ENCODE measurements at regions of chr16 and their contacts with region 1.

Region 1: DNA sequence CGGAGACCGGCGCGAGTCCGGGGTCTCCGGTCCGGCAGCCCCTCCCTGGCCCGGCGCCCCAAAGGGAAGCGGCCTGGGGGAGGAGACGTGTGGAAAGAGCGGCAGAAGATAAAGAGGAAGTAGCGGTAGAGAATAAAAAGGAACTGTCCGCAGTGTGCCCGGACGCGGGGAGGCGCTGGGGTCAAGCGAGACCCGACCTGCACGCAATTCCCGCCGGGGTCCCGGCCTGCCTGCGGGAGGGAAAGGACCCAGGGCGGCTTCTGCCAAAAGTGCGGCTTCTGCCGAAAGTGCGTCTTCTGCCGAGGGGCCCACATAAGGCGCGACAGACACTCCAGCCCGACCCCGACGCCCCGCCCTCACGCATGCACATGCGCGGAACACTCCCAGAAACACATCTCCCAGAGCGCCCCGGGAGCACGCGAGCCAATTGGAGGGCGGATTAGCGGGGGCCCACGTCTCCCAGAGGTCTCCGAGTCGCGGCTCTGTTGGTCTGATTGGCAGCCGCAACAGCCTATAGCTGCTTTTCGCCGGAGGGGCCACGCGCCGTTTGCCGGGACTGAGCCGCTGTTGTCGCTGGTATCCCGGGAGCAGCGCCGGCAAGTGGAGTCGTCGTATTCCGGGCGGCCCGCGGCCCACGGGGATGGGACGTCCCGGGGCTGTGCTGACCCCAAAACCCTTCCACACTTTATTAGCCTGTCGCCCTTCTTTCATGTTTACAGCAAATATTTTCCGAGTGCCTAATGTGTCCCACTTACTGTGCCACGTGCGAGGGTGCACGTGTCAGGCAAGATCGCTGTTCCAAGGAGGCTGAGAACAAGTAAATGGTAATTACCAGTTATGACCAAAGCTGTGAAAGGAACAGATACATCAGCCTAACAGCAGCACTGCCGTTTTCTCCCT is 8.0 kb upstream of the MEFV start:
- DNase-seq: peak; percentile 99
- H3K4me3 ChIP-seq: peak overlapping the region; percentile 87
- H3K27ac ChIP-seq: peak overlapping the region; percentile 83
- H3K4me1 ChIP-seq: peaks cover 24% of the 10 kb centered on the region
- CTCF ChIP-seq: peak; percentile 54

Region 2: GRCh38 chr16:3065069-3065741 is 199.2 kb before region 1 on chr16 and contains the start of gene IL32:
- CTCF ChIA-PET with region 1: no interaction called
- POLR2A ChIA-PET with region 1: no interaction called
- intact Hi-C with region 1: no loop called
- DNase-seq: no peak
- H3K4me3 ChIP-seq: no peak within 1 kb of the TSS
- H3K27ac ChIP-seq: no peak within 1 kb of the TSS
- H3K4me1 ChIP-seq: no peaks in the 10 kb centered on the region
- CTCF ChIP-seq: no peak
- total RNA-seq, gene IL32: not detected in 2 replicates

Region 3: DNA sequence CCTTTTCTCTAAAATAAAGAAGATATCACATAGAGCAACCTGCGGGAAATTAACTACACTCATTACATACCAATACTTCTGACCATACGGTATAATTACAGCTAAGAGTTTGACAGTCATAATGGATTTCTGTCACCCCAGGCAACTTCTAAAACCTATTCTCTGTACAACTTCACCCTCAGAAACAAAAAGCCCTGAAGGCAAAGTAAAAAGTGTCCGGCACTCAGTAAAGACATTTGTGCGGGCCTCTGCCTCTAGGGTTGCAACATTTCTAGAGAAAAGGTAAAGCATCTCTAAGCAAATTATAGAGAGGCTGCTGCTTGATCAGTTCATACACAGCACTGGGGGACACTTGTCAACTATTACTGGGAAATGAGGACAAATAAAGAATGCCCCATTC is 33.1 kb before region 1 on chr16:
- CTCF ChIA-PET with region 1: no interaction called
- POLR2A ChIA-PET with region 1: no interaction called
- intact Hi-C with region 1: no loop called
- DNase-seq: no peak
- H3K4me3 ChIP-seq: no peak overlapping the region
- H3K27ac ChIP-seq: no peak overlapping the region
- H3K4me1 ChIP-seq: peaks cover 19% of the 10 kb centered on the region
- CTCF ChIP-seq: no peak

Region 4: DNA sequence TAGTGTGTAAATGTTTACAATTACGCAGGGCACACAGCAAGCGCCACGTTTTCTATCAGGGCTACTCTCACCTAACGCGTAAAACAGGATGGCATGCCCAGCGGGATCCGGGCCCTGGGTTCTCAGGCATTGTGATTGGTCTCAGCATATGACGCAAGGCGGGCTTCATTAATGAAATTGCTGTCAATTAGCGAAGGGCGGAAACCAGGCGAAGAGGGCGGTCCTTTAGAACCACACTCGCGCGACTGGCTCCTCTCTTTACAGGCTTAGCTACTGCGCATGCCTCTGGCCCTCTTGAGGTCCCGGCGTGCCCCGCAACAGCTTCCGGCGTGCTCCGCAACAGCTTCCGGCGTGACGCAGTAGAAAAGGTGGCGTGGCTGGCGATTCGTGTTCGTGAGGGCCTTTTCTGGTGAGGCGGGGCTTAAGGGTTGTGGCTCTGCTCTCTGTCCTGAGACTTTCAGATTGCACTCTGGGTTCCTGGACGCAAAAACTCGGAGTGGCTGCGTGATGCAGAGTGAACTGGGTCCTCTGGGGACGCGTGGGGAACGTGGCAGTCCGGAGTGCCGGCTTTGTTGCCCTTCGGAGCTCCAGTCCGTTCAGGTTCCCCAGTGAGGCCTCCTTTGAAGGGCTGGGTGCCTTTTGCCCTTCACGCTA is 100.5 kb after region 1 on chr16:
- CTCF ChIA-PET with region 1: no interaction called
- POLR2A ChIA-PET with region 1: no interaction called
- intact Hi-C with region 1: loop called (anchors 5 kb)
- DNase-seq: no peak
- H3K4me3 ChIP-seq: no peak overlapping the region
- H3K27ac ChIP-seq: no peak overlapping the region
- H3K4me1 ChIP-seq: peaks cover 14% of the 10 kb centered on the region
- CTCF ChIP-seq: no peak

Region 5: GRCh38 chr16:3457434-3458252 is 193.3 kb after region 1 on chr16:
- CTCF ChIA-PET with region 1: no interaction called
- POLR2A ChIA-PET with region 1: no interaction called
- intact Hi-C with region 1: loop called (anchors 1 kb)
- DNase-seq: peak; percentile 94
- H3K4me3 ChIP-seq: peak overlapping the region; percentile 98
- H3K27ac ChIP-seq: peak overlapping the region; percentile 53
- H3K4me1 ChIP-seq: peaks cover 43% of the 10 kb centered on the region
- CTCF ChIP-seq: peak; percentile 60

Region 6: DNA sequence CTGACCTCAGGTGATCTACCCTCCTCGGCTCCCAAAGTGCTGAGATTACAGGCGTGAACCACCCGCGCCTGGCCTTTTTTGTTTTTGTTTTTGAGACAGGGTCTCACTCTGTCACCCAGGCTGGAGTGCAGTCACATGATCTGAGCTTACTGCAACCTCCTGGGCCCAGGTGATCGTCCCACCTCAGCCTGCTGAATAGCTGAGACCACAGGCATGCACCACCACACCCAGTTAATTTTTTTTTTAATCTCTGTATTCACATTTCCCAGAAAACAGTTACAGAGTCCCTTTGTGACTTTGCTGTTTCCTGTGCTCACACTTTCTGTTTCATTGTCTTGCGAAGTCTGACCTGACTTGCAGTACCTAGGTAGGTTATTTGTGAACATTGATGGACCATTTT is 239.1 kb after region 1 on chr16:
- CTCF ChIA-PET with region 1: no interaction called
- POLR2A ChIA-PET with region 1: no interaction called
- intact Hi-C with region 1: loop called (anchors 1 kb)
- DNase-seq: peak; percentile 21
- H3K4me3 ChIP-seq: no peak overlapping the region
- H3K27ac ChIP-seq: no peak overlapping the region
- H3K4me1 ChIP-seq: peaks cover 16% of the 10 kb centered on the region
- CTCF ChIP-seq: no peak

Region 7: GRCh38 chr16:3542601-3543373 is 278.4 kb after region 1 on chr16:
- CTCF ChIA-PET with region 1: no interaction called
- POLR2A ChIA-PET with region 1: no interaction called
- intact Hi-C with region 1: no loop called
- DNase-seq: no peak
- H3K4me3 ChIP-seq: no peak overlapping the region
- H3K27ac ChIP-seq: no peak overlapping the region
- H3K4me1 ChIP-seq: no peaks in the 10 kb centered on the region
- CTCF ChIP-seq: no peak

Measured in OCI-LY7 (cell line).